Caco-2 (cell line): ENCODE measurements at regions of chr18 and their contacts with region 1.

Region 1: GRCh38 chr18:3027370-3027891 is 14.5 kb upstream of the LPIN2 start:
- DNase-seq: no peak
- H3K4me3 ChIP-seq: no peak overlapping the region
- H3K4me3 Mint-ChIP-seq: peak overlapping the region; percentile 26
- H3K27ac Mint-ChIP-seq: peak overlapping the region; percentile 15
- H3K4me1 ChIP-seq: peaks cover 24% of the 10 kb centered on the region
- H3K4me1 Mint-ChIP-seq: peaks cover 25% of the 10 kb centered on the region
- H3K27me3 ChIP-seq: no peaks in the 10 kb centered on the region
- H3K27me3 Mint-ChIP-seq: no peaks in the 10 kb centered on the region
- CTCF ChIP-seq: no peak

Region 2: DNA sequence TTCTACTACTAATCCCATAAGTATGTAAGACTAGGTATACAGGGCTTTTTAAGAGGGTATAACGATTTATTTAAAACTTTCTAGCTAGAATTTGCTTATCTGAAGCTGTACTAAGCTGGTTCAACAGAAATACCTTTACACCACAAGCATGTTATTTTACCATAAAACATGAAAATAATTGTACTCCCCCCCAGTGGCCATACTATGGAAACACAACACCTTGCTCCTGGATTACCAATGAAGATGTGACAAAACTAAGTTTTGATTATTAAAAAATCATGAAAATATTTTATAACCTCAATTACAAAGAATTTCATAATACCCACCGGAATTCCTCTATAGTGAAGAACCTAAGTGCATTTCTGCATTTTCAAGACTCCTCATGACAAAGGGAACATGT is 41.8 kb before region 1 on chr18:
- CTCF ChIA-PET with region 1: no interaction called
- POLR2A ChIA-PET with region 1: no interaction called
- intact Hi-C with region 1: no loop called
- DNase-seq: peak in 1 of 2 experiments; percentile 44
- H3K4me3 ChIP-seq: no peak overlapping the region
- H3K4me3 Mint-ChIP-seq: no peak overlapping the region
- H3K27ac Mint-ChIP-seq: no peak overlapping the region
- H3K4me1 ChIP-seq: peaks cover 52% of the 10 kb centered on the region
- H3K4me1 Mint-ChIP-seq: peaks cover 39% of the 10 kb centered on the region
- H3K27me3 ChIP-seq: no peaks in the 10 kb centered on the region
- H3K27me3 Mint-ChIP-seq: no peaks in the 10 kb centered on the region
- CTCF ChIP-seq: peak; percentile 46 to 56

Region 3: DNA sequence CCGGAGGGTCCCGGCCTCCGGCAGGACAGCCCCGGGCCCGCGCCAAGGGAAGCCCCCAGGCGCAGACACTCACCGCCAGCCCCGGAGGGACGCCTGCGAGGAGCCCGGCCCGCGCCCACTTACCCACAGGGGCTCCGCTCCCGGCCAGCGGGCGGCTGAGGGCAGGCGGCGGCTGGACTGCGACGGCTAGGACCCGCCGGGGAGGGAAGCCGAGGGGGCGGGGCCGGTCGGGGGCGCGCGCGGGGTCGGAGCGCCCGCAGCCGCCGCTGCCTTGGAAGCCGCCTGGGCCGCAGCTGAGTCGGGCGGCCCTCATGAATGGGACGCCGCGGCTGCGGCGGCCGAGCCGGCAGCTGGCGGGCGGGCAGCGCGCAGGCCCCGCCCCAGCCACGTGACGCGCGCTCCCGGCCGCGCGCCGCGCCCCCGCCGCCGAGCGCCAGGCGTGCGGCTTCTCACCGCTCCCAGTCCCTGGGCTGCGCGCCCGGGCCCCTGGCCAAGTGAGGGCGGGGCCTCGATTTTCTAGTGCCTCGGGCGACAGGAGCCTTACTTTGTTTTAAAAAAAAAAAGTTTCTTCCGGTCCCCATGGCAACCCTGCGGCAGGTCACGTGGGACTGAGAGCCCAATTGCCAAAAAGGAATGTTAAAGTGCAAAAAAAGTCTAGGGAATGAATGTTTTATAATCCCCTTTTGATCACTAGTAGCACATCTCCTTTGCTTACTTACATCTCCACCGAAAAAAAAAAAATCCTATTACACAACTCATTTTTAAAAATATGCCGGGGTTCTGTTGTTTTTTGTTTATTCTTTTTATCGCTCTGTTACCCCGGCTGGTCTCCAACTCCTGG is 14.2 kb before region 1 on chr18 and contains the start of gene LPIN2:
- CTCF ChIA-PET with region 1: no interaction called
- POLR2A ChIA-PET with region 1: no interaction called
- intact Hi-C with region 1: loop called (anchors 2 kb)
- DNase-seq: peak; percentile 96 to 98
- H3K4me3 ChIP-seq: peak within 1 kb of the TSS; percentile 83
- H3K4me3 Mint-ChIP-seq: peak within 1 kb of the TSS; percentile 87
- H3K27ac Mint-ChIP-seq: peak within 1 kb of the TSS; percentile 87
- H3K4me1 ChIP-seq: peaks cover 18% of the 10 kb centered on the region
- H3K4me1 Mint-ChIP-seq: peaks cover 15% of the 10 kb centered on the region
- H3K27me3 ChIP-seq: no peaks in the 10 kb centered on the region
- H3K27me3 Mint-ChIP-seq: no peaks in the 10 kb centered on the region
- CTCF ChIP-seq: no peak
- total RNA-seq, gene LPIN2: 25.3 and 26.2 TPM in 2 replicates

Region 4: DNA sequence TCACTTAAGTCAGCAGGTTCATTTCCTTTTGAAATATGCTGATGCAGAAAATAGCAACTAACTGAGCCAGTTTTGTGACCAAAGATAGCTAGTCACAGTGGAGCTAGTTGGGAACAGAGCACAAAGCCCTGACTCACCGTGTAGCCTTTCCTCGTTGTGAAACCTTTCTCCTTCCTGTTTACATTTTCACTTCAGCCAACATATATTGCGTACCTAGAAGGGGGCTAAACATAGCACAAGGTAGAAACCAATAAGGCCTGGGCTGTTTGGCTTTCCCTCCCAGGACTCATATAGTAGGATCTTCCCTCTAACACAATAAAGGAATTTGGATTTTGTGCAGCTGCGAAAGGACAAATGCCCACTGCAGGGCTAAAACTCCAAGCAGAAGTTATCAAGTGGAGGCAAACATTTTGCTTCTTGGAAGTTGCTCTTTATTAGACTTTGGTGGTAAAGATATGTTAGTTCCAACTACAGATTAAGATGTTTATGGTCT is 10.0 kb after region 1 on chr18:
- CTCF ChIA-PET with region 1: no interaction called
- POLR2A ChIA-PET with region 1: no interaction called
- intact Hi-C with region 1: loop called (anchors 1 kb)
- DNase-seq: peak; percentile 51 to 56
- H3K4me3 ChIP-seq: no peak overlapping the region
- H3K4me3 Mint-ChIP-seq: no peak overlapping the region
- H3K27ac Mint-ChIP-seq: peak overlapping the region; percentile 50
- H3K4me1 ChIP-seq: peaks cover 10% of the 10 kb centered on the region; the same call in 1 of the 2 replicates
- H3K4me1 Mint-ChIP-seq: peaks cover 15% of the 10 kb centered on the region
- H3K27me3 ChIP-seq: no peaks in the 10 kb centered on the region
- H3K27me3 Mint-ChIP-seq: no peaks in the 10 kb centered on the region
- CTCF ChIP-seq: no peak